ENCODE measurements at regions of chr12 and their contacts with region 1.

Region 1: DNA sequence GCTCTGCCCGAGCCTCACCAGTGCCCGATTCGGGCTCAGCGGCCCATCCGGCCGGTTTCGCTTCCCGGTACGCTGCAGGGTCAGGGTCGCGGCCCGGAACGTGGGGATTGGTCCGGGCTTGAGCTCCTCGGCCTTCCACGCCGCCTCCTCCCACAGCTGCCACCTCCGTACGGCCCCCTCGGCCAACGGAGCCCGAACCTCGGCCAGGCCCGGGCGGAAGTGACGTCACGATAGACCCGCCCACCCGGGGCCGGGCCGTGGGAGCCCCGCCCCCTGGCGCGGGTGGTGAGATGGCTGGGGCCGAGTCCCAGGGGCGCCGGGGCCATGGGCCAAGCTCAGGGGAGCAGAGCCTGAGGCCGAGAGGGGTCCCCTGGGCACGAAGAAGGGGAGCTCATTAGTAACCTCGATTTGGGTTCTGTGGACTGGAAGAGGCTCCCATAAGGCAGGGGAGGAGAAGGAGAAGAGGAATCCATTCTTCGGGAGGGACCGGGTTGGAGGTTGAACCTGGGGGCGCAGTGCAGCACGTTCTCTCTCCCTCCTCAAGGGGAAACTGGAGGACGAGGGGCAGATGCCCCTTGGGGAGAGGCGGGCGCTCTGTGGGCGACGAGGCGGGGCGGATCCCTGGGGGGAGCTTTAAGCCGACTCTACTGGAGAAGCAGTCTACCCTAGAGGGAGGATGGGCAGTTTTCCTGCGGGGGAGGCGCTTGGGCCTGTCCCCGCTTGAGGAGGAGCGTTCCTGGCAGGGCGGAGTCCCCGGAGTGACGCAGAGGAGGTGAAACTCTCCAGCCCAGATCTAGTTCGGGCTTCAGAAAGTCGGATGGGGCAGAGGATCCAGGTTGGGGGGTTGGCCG is at the start of gene MLF2:
- H3K4me3 ChIP-seq: peak within 1 kb of the TSS; percentile 99
- H3K27ac ChIP-seq: peak within 1 kb of the TSS; percentile 93
- H3K4me1 ChIP-seq: 0 out of 2 replicates have a peak, but pooled peaks cover 2% of the 10 kb centered on the region
- CTCF ChIP-seq: no peak; the same call in 1 of the 2 replicates

Region 2: GRCh38 chr12:6723607-6724396 is 29.3 kb before region 1 on chr12 and contains the start of gene COPS7A:
- CTCF ChIA-PET with region 1: interaction called, 21 read pairs
- POLR2A ChIA-PET with region 1: interaction called, 49 read pairs
- H3K4me3 ChIP-seq: peak within 1 kb of the TSS; percentile 58
- H3K27ac ChIP-seq: peak within 1 kb of the TSS; percentile 81
- H3K4me1 ChIP-seq: peaks cover 11% of the 10 kb centered on the region
- CTCF ChIP-seq: peak; percentile 63; the same call in 1 of the 2 replicates

Region 3: DNA sequence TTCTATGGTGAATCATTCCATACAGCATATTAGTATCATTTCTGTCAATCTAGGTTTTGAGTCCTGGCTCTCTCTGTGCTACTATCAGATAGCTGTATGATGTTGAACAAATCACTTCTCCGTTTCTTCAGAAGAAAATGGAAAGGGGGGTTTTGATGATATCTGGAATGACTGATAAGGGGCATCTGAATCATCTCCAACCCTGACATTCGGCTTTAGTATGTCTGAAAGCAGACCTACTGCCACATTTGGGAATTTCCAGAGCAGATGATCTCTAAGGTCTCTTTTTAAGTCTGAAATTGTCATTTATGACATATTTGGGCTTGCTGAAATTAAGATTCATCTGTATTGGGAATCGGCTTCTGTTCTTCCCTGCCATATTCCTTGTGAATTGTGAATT is 10.3 kb before region 1 on chr12:
- CTCF ChIA-PET with region 1: interaction called, 24 read pairs
- POLR2A ChIA-PET with region 1: interaction called, 13 read pairs
- H3K4me3 ChIP-seq: no peak overlapping the region
- H3K27ac ChIP-seq: no peak overlapping the region
- H3K4me1 ChIP-seq: no peaks in the 10 kb centered on the region
- CTCF ChIP-seq: no peak

Region 4: DNA sequence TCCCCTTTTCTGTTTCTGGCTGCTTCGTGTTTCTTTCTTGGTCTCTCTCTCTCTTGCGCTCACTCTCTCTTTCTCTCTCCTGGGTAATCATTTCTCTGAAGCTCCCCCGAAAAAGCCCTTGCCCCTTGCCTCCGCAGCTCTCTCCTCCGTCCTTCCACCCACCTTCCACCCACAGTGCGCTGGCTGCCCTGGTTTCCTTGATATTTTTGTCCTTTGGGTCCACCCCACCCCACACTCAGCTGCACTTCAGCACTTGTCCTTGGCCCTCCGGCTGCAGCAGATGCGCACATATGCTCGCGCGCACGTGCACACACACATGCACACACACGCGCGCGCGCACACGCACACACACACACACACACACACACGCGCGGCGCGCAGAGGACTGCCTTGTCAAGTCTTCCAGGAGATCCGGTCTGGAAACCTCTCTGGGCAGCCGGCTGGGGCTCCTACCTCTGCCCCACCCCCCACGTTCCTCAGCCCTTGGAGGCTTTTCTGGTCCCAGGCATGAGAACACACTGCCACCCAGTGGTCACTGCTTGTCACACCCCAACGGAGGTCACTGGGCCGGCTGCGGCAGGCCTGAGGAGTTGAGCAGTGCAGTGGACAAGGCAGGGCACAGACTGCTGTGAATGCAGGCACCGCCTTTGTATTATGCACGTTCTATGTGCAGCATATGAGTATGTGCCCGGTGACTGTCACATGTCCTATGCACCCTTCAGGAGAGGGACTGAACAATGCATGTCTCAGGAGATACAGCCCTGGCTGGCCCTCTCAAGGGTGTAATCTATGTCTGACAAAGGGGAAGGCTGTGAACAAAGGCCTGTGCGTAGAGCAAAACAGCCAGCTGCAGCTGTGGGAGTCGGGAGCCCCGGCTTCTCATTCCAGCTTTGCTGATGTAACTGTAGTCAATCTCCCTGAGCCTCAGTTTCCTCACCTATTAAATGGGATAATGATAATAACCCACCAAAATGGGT is 25.7 kb after region 1 on chr12:
- CTCF ChIA-PET with region 1: interaction called, 93 read pairs
- POLR2A ChIA-PET with region 1: interaction called, 20 read pairs
- H3K4me3 ChIP-seq: peak overlapping the region; percentile 23
- H3K27ac ChIP-seq: peak overlapping the region; percentile 24; the same call in 1 of the 2 replicates
- H3K4me1 ChIP-seq: peaks cover 7% of the 10 kb centered on the region
- CTCF ChIP-seq: peak; percentile 99

Region 5: DNA sequence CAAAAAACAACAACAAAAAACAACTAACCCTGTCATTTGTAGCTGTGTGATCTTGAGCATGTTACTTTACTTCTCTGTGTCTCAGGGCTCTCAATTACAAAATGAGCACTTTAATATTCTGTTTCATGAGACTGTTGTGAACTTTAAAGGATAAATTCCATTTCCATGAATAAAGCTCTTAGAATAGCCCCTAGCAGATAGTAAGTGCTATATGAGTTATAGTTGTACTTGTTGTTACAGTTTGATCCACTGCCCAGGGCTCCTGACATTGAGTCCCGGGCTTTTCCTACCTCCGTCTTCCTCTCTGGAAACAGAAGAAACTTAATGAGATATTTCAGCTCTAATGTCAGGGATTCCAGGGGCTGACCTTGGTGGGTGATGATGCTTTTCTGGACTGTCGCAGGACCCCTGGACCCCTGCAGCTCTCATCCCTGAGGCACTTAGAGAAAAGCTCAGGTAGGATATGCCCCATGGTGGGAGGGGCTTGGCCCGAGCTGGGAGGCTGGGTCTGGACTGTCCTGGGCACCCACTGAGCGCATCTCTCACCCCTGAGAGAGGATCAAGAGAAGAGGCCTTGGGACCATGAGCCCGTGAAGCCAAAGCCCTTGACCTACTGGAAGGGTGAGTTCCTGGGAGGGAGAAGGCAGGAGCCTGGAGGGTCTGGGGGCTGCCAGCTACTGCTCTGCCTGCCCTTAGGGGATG is 80.2 kb after region 1 on chr12:
- CTCF ChIA-PET with region 1: interaction called, 54 read pairs
- POLR2A ChIA-PET with region 1: interaction called, 14 read pairs
- H3K4me3 ChIP-seq: no peak overlapping the region
- H3K27ac ChIP-seq: no peak overlapping the region
- H3K4me1 ChIP-seq: no peaks in the 10 kb centered on the region
- CTCF ChIP-seq: no peak

Region 6: DNA sequence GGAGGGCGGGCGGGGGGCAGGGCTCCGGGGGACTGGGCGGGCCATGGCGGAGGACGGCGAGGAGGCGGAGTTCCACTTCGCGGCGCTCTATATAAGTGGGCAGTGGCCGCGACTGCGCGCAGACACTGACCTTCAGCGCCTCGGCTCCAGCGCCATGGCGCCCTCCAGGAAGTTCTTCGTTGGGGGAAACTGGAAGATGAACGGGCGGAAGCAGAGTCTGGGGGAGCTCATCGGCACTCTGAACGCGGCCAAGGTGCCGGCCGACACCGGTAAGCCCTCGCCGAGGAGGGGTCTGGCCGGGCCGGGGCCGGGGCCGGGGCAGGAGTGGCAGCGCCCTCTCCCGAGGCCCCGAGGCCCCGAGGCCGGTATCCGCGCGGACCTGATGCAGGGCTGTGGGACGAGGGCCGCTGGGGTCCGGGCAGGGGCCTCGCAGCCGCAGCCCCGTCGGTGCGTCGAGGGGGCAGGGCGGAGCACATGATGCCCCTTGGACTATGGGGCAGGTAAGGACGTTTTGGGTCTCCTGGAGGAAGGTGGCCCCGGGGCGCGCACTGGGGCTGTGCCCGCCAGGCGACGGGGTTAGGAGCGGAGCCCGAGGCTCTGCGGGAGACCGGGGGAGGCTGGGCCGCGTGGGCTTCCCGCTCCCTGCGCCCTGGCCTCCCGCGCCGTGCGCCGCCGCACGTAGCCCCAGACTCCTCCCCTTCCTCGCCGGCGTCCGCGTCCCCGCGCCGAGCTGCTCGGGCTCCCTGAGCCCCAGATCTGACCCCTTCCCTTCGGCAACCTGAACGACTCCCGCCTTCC is 114.5 kb after region 1 on chr12 and contains the start of gene TPI1:
- CTCF ChIA-PET with region 1: interaction called, 12 read pairs
- POLR2A ChIA-PET with region 1: interaction called, 13 read pairs
- H3K4me3 ChIP-seq: peak within 1 kb of the TSS; percentile 87
- H3K27ac ChIP-seq: peak within 1 kb of the TSS; percentile 98
- H3K4me1 ChIP-seq: peaks cover 7% of the 10 kb centered on the region
- CTCF ChIP-seq: peak; percentile 10; the same call in 1 of the 2 replicates

Region 7: GRCh38 chr12:6937481-6938297 is 184.5 kb after region 1 on chr12:
- CTCF ChIA-PET with region 1: no interaction called
- POLR2A ChIA-PET with region 1: no interaction called
- H3K4me3 ChIP-seq: peak overlapping the region; percentile 54
- H3K27ac ChIP-seq: peak overlapping the region; percentile 95
- H3K4me1 ChIP-seq: peaks cover 6% of the 10 kb centered on the region
- CTCF ChIP-seq: peak; percentile 98